ENCODE measurements at regions of chr7 and their contacts with region 1.

Region 1: DNA sequence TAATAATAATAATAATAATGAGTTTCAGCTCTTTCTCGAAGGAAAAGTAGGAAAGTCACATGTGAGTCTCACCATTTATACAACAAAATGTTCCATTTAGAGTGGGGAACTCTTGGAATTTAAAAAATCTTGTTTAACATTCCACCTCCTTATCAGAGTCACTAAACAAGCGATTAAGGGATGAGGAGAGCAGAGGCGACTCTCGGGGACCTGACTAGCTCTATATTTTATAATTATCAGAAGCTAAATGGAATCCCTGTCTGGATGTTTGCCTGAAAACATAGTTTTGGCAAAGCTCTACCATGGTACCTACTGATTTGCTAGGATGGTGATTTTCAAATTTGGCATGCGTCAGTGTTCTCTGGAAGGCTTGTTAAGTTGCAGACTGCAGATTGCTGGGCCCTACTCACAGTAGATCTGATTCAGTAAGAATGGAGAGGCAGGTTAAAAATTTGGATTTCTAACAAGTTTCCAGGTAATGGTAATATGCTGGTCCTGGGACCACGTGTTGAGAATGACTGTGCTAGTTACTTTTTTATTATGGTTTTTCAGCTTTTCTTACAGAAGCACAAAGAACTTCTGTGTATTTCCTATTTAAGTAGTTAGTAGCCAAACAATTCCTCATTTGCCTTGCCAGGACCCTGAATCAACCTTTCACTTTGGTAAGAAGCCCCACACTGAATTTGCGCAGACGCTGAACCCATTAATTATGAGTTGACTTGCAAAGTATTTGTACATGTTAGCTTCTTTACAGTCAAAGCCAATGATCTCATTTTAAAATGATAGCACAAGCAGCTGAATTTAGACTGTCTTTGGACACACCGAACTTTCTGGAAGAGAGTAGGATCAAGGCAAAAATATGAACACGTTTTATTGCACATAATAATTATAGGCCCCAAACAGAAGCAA is 39.5 kb downstream of the CPED1 start:
- DNase-seq: no peak
- ATAC-seq: peak; percentile 58

Region 2: GRCh38 chr7:121061677-121062582 is 33.9 kb after region 1 on chr7:
- intact Hi-C with region 1: loop called (anchors 5 kb)
- DNase-seq: no peak
- ATAC-seq: no peak

Measured in Right ventricle myocardium inferior (tissue), 1 donor.